ENCODE measurements at regions of chr5 and their contacts with region 1.

Region 1: GRCh38 chr5:59218424-59219045 is 635.7 kb downstream of the RAB3C start:
- ATAC-seq: no peak
- H3K4me3 ChIP-seq: no peak overlapping the region
- H3K27ac ChIP-seq: no peak overlapping the region
- H3K4me1 ChIP-seq: no peaks in the 10 kb centered on the region

Region 2: GRCh38 chr5:59079622-59080620 is 138.6 kb before region 1 on chr5:
- in situ Hi-C with region 1: no loop called
- ATAC-seq: peak in 5 of 8 experiments; percentile 80 to 99 (median 93)
- H3K4me3 ChIP-seq: no peak overlapping the region
- H3K27ac ChIP-seq: no peak overlapping the region
- H3K4me1 ChIP-seq: no peaks in the 10 kb centered on the region

Region 3: DNA sequence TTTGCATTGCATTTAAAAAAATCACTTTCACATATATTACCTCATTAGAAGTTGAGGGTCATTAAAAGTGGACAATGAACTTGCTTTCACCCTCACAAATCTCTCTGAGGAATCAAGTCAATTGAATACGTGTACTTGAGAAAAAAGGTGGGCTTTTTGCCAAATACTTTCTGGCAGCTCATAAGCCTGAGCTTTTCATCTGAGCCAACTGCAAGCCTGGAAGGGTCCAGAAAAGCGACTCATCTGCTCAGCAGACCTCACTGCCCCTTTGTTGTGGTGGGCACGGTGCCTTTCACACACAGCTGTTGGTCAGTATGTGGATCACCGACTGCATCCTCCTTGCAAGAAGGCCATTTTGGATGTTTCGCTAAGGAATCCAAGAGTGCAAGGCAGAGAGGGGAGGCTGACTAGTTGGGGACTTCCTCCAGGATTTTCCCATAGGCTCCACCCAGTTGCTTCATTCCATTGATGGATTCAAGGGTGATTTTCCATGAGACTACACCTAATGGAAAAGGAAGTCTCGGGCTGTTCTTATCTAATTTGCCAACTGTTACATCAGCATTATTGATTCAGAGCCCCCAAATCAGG is 110.3 kb after region 1 on chr5:
- in situ Hi-C with region 1: loop called in 1 of 9 experiments (anchors 25 kb)
- ATAC-seq: peak in 6 of 8 experiments; percentile 35 to 85 (median 64)
- H3K4me3 ChIP-seq: no peak overlapping the region
- H3K27ac ChIP-seq: peak overlapping the region in 1 of 2 donors; percentile 51
- H3K4me1 ChIP-seq: peaks cover 0 to 3% of the 10 kb centered on the region in 2 donors

Measured in motor neuron (in vitro differentiated cells).